ENCODE measurements at regions of chr2 and their contacts with region 1.

Region 1: GRCh38 chr2:201182650-201183364 is at the start of gene CASP10:
- DNase-seq: peak; percentile 50
- H3K4me3 Mint-ChIP-seq: peak within 1 kb of the TSS; percentile 90
- H3K27ac Mint-ChIP-seq: peak within 1 kb of the TSS; percentile 89
- H3K4me1 Mint-ChIP-seq: peaks cover 40% of the 10 kb centered on the region
- H3K27me3 Mint-ChIP-seq: no peaks in the 10 kb centered on the region
- total RNA-seq, gene CASP10: 45.0 to 49.6 TPM

Region 2: DNA sequence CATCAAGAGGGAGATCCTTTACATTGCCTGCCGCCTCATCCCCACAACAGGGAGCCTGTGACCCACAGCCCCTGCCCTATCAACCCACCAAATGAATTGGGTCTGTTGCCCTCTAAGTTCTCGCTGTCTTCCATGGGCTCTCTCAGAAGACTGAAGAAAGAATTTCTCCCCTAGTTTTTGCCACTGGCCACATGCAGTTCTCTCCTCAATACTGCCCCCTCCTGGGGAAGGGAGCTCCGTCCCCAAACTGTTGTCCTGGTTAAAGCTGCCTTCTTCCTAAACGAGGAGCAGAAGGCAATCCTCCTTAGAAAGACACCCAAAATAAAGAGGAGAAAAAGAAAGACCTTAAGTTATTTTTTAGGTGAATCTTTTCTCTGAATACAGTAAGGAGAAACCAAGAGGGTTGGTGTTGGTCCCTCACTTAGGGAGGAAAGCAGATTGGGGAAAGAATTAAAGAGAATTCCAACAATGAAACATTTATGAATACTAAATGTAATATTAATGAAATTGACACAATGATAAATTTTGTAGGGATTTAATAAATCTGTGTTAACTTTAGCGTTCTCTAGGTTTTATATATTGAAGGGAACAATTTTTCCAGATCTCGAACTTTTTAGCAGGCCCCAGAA is 1693.9 kb before region 1 on chr2:
- CTCF ChIA-PET with region 1: no interaction called
- POLR2A ChIA-PET with region 1: no interaction called
- DNase-seq: peak; percentile 54
- H3K4me3 Mint-ChIP-seq: no peak overlapping the region
- H3K27ac Mint-ChIP-seq: no peak overlapping the region
- H3K4me1 Mint-ChIP-seq: no peaks in the 10 kb centered on the region
- H3K27me3 Mint-ChIP-seq: peaks cover 7% of the 10 kb centered on the region

Region 3: DNA sequence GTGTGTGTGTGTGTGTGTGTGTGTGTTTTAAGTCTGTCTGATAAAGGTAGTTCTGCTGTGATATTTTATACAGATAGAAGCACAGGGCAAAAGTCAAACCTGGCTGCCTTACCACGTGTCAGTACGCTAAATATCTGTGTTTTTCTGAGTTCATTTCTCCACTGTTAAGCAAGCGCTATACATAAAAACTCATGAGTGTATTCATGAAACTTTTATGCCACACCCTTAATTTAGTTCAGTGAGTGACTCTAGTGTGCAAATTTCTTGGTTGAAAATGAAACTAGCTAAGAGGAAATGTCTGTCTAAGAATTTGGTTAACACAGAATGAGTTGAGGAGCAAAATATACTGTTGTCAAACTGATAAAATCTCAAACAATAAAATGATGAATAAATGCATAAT is 11.3 kb after region 1 on chr2:
- CTCF ChIA-PET with region 1: interaction called, 16 read pairs
- POLR2A ChIA-PET with region 1: interaction called, 4 read pairs
- DNase-seq: no peak
- H3K4me3 Mint-ChIP-seq: peak overlapping the region; percentile 65
- H3K27ac Mint-ChIP-seq: peak overlapping the region; percentile 92
- H3K4me1 Mint-ChIP-seq: peaks cover 70% of the 10 kb centered on the region
- H3K27me3 Mint-ChIP-seq: no peaks in the 10 kb centered on the region